Left colon (tissue), 2 donors: ENCODE measurements at regions of chr2 and their contacts with region 1.

Region 1: GRCh38 chr2:19863303-19864041 is 38.3 kb downstream of the TTC32 start:
- DNase-seq: peak; percentile 38 to 76
- ATAC-seq: peak; percentile 91

Region 2: GRCh38 chr2:18387441-18388206 is 1475.8 kb before region 1 on chr2:
- intact Hi-C with region 1: loop called in 1 of 2 experiments (anchors 10 kb)
- DNase-seq: peak; percentile 49 to 77
- ATAC-seq: peak; percentile 78

Region 3: DNA sequence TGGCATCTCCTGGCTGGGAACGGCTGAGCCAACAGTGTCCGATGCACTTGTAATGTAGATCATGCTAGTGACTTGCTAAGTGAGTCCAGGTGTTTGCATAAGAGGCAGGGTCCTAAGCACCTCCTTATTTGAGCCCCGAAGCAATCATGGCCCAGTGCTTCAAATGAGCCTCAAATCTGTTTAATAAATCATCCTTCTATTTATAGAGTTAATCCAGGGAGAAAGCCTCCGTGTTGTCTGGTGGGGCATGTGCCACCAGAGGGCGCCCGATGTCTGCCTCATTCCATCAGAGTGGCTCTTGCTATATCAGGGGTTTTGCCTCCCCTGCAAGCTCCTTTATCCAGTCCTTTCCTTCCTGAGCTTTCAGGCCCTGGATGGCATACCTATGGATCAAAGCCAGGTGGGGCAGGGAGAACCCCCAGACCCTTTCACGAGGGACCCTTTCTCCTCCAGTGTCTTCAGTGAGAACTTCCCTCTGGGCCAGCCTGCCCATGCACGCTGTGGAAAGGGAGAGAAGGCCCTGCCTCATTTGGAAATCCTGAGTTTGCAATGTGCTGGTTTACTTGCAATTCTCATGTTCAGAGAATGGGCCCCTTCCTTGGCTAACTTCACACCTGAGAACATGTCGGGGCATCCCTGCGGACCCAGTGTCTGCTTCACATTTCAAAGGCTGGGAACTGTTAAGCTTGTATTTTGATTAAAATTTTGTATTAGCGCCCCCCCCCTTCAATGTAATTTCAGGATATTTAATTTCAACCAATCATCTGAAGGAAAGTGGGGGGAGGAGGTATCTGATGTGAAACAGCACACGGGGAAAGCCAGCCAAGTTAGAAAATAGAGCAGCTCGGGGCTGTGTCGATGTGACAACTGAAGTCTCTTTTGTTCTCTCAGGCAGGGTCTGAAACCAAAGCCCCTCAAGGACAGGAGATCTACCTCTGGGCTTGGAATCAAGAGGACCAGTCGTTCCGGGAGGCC is 1342.7 kb before region 1 on chr2:
- intact Hi-C with region 1: loop called in 1 of 2 experiments (anchors 10 kb)
- DNase-seq: peak; percentile 49 to 86
- ATAC-seq: peak; percentile 82

Region 4: GRCh38 chr2:18749912-18750526 is 1113.5 kb before region 1 on chr2:
- intact Hi-C with region 1: loop called in 1 of 2 experiments (anchors 5 kb)
- DNase-seq: peak in 1 of 2 donors; percentile 63
- ATAC-seq: peak; percentile 53

Region 5: GRCh38 chr2:19362755-19363473 is 500.6 kb before region 1 on chr2:
- intact Hi-C with region 1: loop called (anchors 10 kb)
- DNase-seq: peak; percentile 79 to 80
- ATAC-seq: peak; percentile 84

Region 6: GRCh38 chr2:19764998-19765397 is 98.5 kb before region 1 on chr2:
- intact Hi-C with region 1: no loop called
- DNase-seq: no peak
- ATAC-seq: no peak

Region 7: GRCh38 chr2:20035955-20036666 is 172.6 kb after region 1 on chr2:
- intact Hi-C with region 1: no loop called
- DNase-seq: no peak
- ATAC-seq: peak; percentile 100